Activated CD8-positive, alpha-beta T cell treated with anti-CD3 and anti-CD28 coated beads for 36 hours (primary cell): ENCODE measurements at regions of chr16 and their contacts with region 1.

Region 1: GRCh38 chr16:27426423-27427408 is 24.7 kb downstream of the IL21R start:
- DNase-seq: peak; percentile 90
- ATAC-seq: peak; percentile 90
- H3K4me3 Mint-ChIP-seq: peak overlapping the region; percentile 64
- H3K27ac Mint-ChIP-seq: peak overlapping the region; percentile 92
- H3K4me1 Mint-ChIP-seq: peaks cover 84% of the 10 kb centered on the region
- H3K27me3 Mint-ChIP-seq: no peaks in the 10 kb centered on the region
- CTCF ChIP-seq: no peak

Region 2: DNA sequence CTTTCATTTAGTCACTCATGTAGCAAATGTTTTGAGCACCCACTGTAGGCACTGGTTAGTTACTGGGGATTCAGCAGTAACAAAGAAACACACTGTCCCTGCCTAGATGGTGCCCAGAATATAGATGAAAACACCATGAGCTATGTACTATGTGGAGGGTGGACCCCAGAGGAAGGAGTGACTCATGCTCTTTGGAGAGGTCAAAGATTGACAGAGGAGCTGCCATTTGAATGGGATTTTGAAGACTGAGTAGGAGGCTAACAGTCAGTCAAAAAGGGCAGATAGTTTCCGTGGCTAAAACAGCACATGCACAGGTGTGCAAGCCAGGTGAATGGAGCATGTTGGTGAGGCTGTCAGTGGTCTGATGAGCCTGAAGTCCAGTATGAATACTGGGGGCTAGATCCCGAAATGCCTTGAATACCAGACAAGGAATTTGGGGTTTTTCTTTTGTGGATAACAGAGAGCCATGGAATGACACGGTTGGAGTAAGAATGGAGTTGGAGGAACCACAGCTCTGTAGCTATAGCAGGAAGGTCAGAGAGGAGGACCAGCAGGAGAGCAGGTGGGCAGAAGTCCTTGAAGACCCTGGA is 18.6 kb before region 1 on chr16:
- CTCF ChIA-PET with region 1: no interaction called
- POLR2A ChIA-PET with region 1: interaction called, 86 read pairs
- intact Hi-C with region 1: loop called (anchors 2 kb)
- DNase-seq: peak; percentile 86
- ATAC-seq: peak; percentile 72
- H3K4me3 Mint-ChIP-seq: peak overlapping the region; percentile 99
- H3K27ac Mint-ChIP-seq: peak overlapping the region; percentile 96
- H3K4me1 Mint-ChIP-seq: peaks cover 65% of the 10 kb centered on the region
- H3K27me3 Mint-ChIP-seq: no peaks in the 10 kb centered on the region
- CTCF ChIP-seq: no peak

Region 3: GRCh38 chr16:27414758-27415431 is 11.8 kb before region 1 on chr16:
- CTCF ChIA-PET with region 1: interaction called, 3 read pairs
- POLR2A ChIA-PET with region 1: interaction called, 17 read pairs
- intact Hi-C with region 1: no loop called
- DNase-seq: no peak
- ATAC-seq: no peak
- H3K4me3 Mint-ChIP-seq: no peak overlapping the region
- H3K27ac Mint-ChIP-seq: peak overlapping the region; percentile 76
- H3K4me1 Mint-ChIP-seq: peaks cover 76% of the 10 kb centered on the region
- H3K27me3 Mint-ChIP-seq: no peaks in the 10 kb centered on the region
- CTCF ChIP-seq: no peak